ENCODE measurements at regions of chr9 and their contacts with region 1.

Region 1: GRCh38 chr9:6055213-6055612 is 39.8 kb upstream of the RANBP6 start:
- DNase-seq: peak; percentile 89
- ATAC-seq: peak; percentile 77
- H3K4me3 ChIP-seq: no peak overlapping the region
- H3K27ac ChIP-seq: no peak overlapping the region
- H3K4me1 ChIP-seq: no peaks in the 10 kb centered on the region
- H3K27me3 ChIP-seq: no peaks in the 10 kb centered on the region
- CTCF ChIP-seq: peak; percentile 56 to 87 (median 70); a peak in 5 of 6 replicates
- POLR2A ChIP-seq: no peak
- RAD21 ChIP-seq: peak; percentile 93

Region 2: DNA sequence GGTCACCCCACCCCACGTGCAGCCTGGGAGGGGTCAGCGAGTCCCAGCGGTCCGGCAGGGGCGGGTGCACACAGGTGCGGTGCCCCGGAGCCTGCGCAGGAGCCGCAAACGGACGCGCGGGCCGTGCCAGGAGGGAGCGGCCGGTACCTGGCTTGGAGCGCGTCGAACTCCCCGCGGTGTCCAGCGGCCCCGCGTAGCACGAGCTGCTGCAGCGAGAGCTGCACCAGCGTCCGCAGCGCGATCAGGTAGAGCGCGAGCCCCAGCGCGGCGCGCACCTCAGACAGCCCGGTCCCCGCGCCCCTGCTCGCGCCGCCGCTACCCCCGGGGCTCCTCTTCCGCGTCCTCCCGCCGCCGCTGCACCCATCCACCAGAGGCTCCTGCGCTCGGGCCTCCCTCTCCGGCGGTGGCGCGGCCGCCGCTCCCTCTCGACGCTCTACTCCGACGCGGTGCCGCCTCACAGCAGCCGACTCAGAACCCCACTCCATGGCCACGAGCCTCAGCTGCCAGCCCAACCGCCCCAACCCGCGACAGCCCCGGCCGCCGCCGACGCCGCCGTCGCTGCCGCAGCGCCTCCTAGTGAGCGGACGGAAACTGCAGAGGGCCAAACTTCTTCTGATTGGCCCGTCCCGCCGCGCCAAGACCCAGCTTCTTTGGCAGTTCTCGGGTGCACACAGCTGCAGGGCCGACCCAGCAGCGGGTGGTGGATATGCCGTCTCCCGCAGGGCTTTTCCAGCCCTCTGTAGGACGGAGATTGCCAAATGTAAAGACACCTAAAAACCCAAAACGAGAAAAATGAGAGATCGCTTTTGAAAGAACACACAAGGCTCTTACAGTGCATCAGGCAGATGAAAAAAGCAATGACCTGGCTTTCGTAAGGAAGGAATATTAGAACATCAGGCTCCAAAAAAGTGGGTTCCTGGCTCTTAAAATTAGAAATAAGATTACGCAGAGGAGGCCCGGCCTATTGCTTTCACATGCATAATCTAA is 222.4 kb before region 1 on chr9 and contains the start of gene ERMP1:
- CTCF ChIA-PET with region 1: interaction called, 12 read pairs
- POLR2A ChIA-PET with region 1: no interaction called
- RAD21 ChIA-PET with region 1: no interaction called
- intact Hi-C with region 1: no loop called
- DNase-seq: peak; percentile 41
- ATAC-seq: peak; percentile 89
- H3K4me3 ChIP-seq: peak within 1 kb of the TSS; percentile 57 to 74
- H3K27ac ChIP-seq: peak within 1 kb of the TSS; percentile 86
- H3K4me1 ChIP-seq: peaks cover 8 to 18% of the 10 kb centered on the region in 2 experiments
- H3K27me3 ChIP-seq: no peaks in the 10 kb centered on the region
- CTCF ChIP-seq: peak; percentile 42 to 83 (median 83); a peak in 5 of 6 replicates
- POLR2A ChIP-seq: peak; percentile 76
- RAD21 ChIP-seq: peak; percentile 54
- total RNA-seq, gene ERMP1: 29.9 TPM

Region 3: DNA sequence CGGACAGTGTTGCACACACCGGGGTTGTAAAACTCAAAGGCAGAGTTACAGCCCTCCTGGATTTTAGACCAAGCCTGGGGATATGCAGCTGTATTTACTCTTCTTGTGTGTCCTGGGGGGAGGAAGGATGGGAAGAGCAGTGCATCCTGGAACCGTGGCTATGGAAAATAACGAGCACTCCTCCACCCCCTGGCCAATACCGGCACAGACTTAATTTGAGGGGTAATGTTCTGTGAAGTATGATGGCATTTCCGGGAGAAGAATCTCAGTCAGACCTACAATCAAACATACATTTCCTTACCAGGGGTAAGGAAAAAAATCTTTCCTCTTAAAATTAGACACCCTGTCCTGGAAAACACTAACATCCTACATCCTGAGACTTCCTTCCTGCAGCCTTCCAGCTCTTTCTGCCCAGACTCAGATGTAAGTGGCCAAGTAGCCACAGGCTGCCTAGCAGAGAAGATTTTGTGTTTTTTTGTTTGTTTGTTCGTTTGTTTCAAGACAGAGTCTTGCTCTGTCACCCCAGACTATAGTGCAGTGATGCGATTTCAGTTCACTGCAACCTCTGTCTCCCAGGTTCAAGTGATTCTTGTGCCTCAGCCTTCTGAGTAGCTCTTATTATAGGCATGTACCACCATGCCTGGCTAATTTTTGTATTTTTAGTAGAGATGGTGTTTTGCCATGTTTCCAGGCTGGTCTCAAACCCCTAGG is 211.3 kb before region 1 on chr9:
- CTCF ChIA-PET with region 1: no interaction called
- POLR2A ChIA-PET with region 1: no interaction called
- RAD21 ChIA-PET with region 1: no interaction called
- intact Hi-C with region 1: no loop called
- DNase-seq: no peak
- ATAC-seq: no peak
- H3K4me3 ChIP-seq: no peak overlapping the region
- H3K27ac ChIP-seq: no peak overlapping the region; the same call in 1 of the 2 replicates
- H3K4me1 ChIP-seq: peaks cover 38 to 50% of the 10 kb centered on the region in 2 experiments
- H3K27me3 ChIP-seq: no peaks in the 10 kb centered on the region
- CTCF ChIP-seq: no peak
- POLR2A ChIP-seq: no peak
- RAD21 ChIP-seq: no peak

Region 4: DNA sequence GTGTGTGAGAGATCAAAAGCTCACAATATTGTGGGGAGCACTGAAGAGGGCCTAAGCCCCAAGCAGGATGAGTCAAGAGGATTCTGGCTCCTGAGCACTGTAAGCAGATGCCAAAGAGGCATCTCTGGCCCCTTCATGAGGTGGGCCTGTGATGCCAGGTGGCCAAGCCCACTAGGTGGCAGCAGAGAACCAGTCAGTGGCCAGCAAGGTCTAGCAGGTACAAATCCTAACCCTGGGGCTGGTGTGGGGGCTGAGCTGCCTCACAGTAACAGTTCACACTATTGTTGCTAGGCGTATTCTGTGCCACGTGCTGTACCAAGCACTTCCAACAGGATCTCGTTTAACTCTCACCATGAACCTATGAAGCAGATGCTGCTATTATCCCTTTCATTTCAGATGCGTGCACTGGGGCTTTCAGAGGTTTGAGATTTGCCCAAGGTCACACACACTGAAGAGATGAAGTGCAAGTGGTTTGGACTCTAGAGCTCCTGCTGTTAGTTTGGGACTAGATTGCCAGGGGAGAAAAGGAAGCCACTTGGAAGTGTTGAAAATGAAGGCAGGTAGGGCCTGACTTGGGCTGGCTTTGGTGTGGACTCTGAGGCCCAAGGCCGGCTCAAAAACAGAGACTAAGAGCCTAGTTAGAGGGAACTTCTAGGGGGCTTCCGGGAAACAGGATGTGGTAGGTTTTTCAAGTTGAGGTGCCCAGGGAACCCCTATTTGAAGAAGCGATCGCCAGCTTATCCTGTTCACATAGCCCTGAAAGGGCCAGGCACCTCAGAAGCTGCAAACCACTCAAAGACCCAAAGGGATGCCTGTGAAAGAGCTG is 168.9 kb before region 1 on chr9:
- CTCF ChIA-PET with region 1: interaction called, 52 read pairs
- POLR2A ChIA-PET with region 1: no interaction called
- RAD21 ChIA-PET with region 1: interaction called, 3 to 13 read pairs
- intact Hi-C with region 1: loop called (anchors 1 kb)
- DNase-seq: peak; percentile 48
- ATAC-seq: peak; percentile 99
- H3K4me3 ChIP-seq: no peak overlapping the region
- H3K27ac ChIP-seq: no peak overlapping the region
- H3K4me1 ChIP-seq: peaks cover 0 to 14% of the 10 kb centered on the region in 2 experiments; a peak in 2 of 4 replicates
- H3K27me3 ChIP-seq: no peaks in the 10 kb centered on the region
- CTCF ChIP-seq: peak; percentile 84 to 96 (median 95); a peak in 5 of 6 replicates
- POLR2A ChIP-seq: no peak
- RAD21 ChIP-seq: peak; percentile 93

Region 5: GRCh38 chr9:6106576-6107339 is 51.5 kb after region 1 on chr9:
- CTCF ChIA-PET with region 1: interaction called, 16 read pairs
- POLR2A ChIA-PET with region 1: no interaction called
- RAD21 ChIA-PET with region 1: interaction called in 1 of 2 experiments, 3 read pairs
- intact Hi-C with region 1: no loop called
- DNase-seq: peak; percentile 34
- ATAC-seq: peak; percentile 82
- H3K4me3 ChIP-seq: no peak overlapping the region
- H3K27ac ChIP-seq: 0 out of 2 replicates have a peak overlapping the region, but pooled peaks have one; percentile 22
- H3K4me1 ChIP-seq: peaks cover 15 to 41% of the 10 kb centered on the region in 2 experiments
- H3K27me3 ChIP-seq: no peaks in the 10 kb centered on the region
- CTCF ChIP-seq: peak; percentile 42 to 76 (median 54); a peak in 5 of 6 replicates
- POLR2A ChIP-seq: no peak
- RAD21 ChIP-seq: peak; percentile 50

Region 6: DNA sequence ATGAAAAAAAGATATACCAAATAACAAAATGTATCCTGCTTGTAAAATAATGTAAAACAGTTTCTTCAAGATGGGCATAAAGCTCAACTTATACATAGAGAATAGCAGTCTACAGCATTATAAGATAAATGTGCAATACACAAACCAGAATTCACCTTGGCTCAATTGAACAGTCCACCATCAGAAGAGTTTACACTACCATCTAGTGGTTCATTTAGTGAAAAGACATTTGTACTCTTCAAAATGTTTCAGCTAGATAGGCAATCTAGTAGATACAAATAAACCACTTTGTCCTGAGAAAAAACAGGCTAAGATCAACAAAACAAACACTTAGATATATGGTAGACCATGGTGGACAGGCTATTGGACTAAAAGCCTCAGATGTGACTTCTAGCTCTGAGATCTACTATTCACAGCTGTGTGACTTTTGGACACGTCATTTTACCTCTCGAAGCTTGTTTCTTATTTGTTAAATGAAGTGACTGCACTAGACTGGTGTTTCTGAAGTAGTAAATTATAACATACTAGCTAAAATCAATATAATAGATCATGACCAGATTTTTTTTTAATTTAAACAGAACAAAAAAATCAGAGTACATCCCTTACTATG is 250.8 kb after region 1 on chr9:
- CTCF ChIA-PET with region 1: interaction called, 129 read pairs
- POLR2A ChIA-PET with region 1: interaction called, 6 read pairs
- RAD21 ChIA-PET with region 1: interaction called, 8 to 12 read pairs
- intact Hi-C with region 1: loop called (anchors 1 kb)
- DNase-seq: peak; percentile 32
- ATAC-seq: peak; percentile 78
- H3K4me3 ChIP-seq: no peak overlapping the region
- H3K27ac ChIP-seq: no peak overlapping the region
- H3K4me1 ChIP-seq: peaks cover 3 to 6% of the 10 kb centered on the region in 2 experiments; a peak in 1 of 4 replicates
- H3K27me3 ChIP-seq: no peaks in the 10 kb centered on the region
- CTCF ChIP-seq: peak; percentile 48 to 81 (median 69)
- POLR2A ChIP-seq: no peak
- RAD21 ChIP-seq: peak; percentile 89

Region 7: DNA sequence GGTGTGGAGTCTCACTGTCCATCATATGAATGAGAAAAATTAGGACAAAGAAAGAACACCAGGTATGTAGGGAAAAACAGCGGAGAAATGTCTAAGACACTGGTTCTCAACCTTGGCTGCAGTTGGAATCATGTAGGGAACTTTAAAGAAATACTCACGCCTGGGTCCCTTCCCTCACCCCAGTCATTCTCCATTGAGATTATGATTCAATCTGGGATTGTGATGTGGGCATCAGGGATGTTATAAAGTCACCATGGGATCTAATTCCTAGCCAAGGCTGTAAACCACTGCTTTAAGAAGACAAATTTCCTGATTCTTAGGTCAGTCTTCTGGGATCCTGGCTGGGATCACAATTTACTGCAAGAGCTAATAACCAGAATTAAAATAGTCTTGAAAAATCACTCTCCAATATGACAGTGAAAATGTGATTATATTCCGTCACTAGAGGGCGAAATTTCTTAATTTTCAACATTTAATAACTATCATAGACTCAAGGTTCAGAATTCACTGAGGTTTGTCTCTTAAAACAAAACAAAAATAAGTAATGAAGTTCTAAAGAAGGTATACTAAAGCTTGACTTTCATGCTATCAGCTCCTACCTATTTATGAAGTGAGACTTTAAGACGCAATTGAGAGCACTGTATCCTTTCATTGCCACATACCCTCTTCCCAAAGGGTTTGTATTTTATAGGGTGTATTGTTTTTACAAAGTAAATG is 529.8 kb after region 1 on chr9:
- CTCF ChIA-PET with region 1: no interaction called
- POLR2A ChIA-PET with region 1: no interaction called
- RAD21 ChIA-PET with region 1: no interaction called
- intact Hi-C with region 1: loop called (anchors 5 kb)
- DNase-seq: peak; percentile 23
- ATAC-seq: peak; percentile 70
- H3K4me3 ChIP-seq: no peak overlapping the region
- H3K27ac ChIP-seq: no peak overlapping the region
- H3K4me1 ChIP-seq: peaks cover under 1 to 3% of the 10 kb centered on the region in 2 experiments
- H3K27me3 ChIP-seq: no peaks in the 10 kb centered on the region
- CTCF ChIP-seq: peak; percentile 16 to 69 (median 61); a peak in 4 of 6 replicates
- POLR2A ChIP-seq: no peak
- RAD21 ChIP-seq: peak; percentile 69

Region 8: DNA sequence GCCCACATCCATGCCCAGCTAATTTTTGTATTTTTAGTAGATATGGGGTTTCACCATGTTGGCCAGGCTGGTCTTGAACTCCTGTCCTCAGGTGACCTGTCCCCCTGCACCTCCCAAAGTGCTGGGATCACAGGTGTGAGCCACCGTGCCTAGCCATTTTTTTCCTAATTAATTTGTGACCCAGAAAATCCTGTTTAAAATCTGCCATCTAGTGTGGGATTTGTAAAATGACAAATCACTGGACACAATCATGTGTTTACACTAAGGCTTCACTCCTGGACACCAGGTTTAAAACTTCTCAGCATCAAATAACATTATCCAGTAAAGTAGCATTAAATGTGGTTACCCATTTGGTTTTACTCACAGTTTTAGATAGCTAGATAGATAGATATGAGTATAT is 684.0 kb after region 1 on chr9:
- CTCF ChIA-PET with region 1: interaction called, 4 read pairs
- POLR2A ChIA-PET with region 1: no interaction called
- RAD21 ChIA-PET with region 1: no interaction called
- intact Hi-C with region 1: loop called (anchors 2 kb)
- DNase-seq: peak; percentile 38
- ATAC-seq: peak; percentile 95
- H3K4me3 ChIP-seq: no peak overlapping the region
- H3K27ac ChIP-seq: no peak overlapping the region
- H3K4me1 ChIP-seq: no peaks in the 10 kb centered on the region
- H3K27me3 ChIP-seq: no peaks in the 10 kb centered on the region
- CTCF ChIP-seq: peak; percentile 37 to 57 (median 55); a peak in 5 of 6 replicates
- POLR2A ChIP-seq: no peak
- RAD21 ChIP-seq: peak; percentile 75